Activated CD4-positive, alpha-beta T cell treated with anti-CD3 and anti-CD28 coated beads, Interleukin-2, amount 10 ng/mL, durations not matched to agents 24 days and 14 days (primary cell): ENCODE measurements at regions of chr1 and their contacts with region 1.

Region 1: GRCh38 chr1:214427871-214428277 is 123.5 kb downstream of the PTPN14 start:
- DNase-seq: peak; percentile 93
- H3K4me3 Mint-ChIP-seq: peak overlapping the region; percentile 72
- H3K27ac Mint-ChIP-seq: peak overlapping the region; percentile 97
- H3K4me1 Mint-ChIP-seq: peaks cover 34% of the 10 kb centered on the region
- H3K27me3 Mint-ChIP-seq: no peaks in the 10 kb centered on the region

Region 2: DNA sequence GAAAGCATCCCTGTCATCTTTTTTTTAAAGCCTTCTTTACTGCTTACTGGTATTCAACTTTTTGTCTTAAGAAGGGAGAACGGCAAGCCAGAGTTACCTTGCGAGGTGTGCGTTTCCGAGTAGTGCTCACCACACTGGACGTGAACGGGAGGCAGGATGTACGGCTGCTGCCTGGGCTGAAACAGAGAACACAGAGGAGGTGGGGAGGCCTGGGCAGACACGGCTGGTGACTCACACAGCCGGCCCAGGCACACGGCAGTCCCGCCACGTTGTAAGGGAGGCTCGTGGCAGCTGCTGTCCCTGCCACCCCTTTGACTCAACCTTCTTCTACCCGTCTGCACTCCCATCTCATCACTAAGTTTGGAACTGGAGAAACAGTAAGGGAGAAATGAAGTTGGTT is 41.1 kb before region 1 on chr1:
- intact Hi-C with region 1: loop called (anchors 2 kb)
- DNase-seq: peak; percentile 76
- H3K4me3 Mint-ChIP-seq: peak overlapping the region; percentile 53
- H3K27ac Mint-ChIP-seq: peak overlapping the region; percentile 84
- H3K4me1 Mint-ChIP-seq: peaks cover 28% of the 10 kb centered on the region
- H3K27me3 Mint-ChIP-seq: no peaks in the 10 kb centered on the region

Region 3: GRCh38 chr1:214404154-214404553 is 23.7 kb before region 1 on chr1:
- intact Hi-C with region 1: loop called (anchors 2 kb)
- DNase-seq: no peak
- H3K4me3 Mint-ChIP-seq: no peak overlapping the region
- H3K27ac Mint-ChIP-seq: peak overlapping the region; percentile 81
- H3K4me1 Mint-ChIP-seq: peaks cover 38% of the 10 kb centered on the region
- H3K27me3 Mint-ChIP-seq: no peaks in the 10 kb centered on the region

Region 4: GRCh38 chr1:214413315-214413714 is 14.6 kb before region 1 on chr1:
- intact Hi-C with region 1: loop called (anchors 2 kb)
- DNase-seq: no peak
- H3K4me3 Mint-ChIP-seq: no peak overlapping the region
- H3K27ac Mint-ChIP-seq: no peak overlapping the region
- H3K4me1 Mint-ChIP-seq: peaks cover 22% of the 10 kb centered on the region
- H3K27me3 Mint-ChIP-seq: no peaks in the 10 kb centered on the region

Region 5: GRCh38 chr1:214566158-214567104 is 138.6 kb after region 1 on chr1:
- intact Hi-C with region 1: no loop called
- DNase-seq: no peak
- H3K4me3 Mint-ChIP-seq: no peak overlapping the region
- H3K27ac Mint-ChIP-seq: peak overlapping the region; percentile 45
- H3K4me1 Mint-ChIP-seq: peaks cover 7% of the 10 kb centered on the region
- H3K27me3 Mint-ChIP-seq: peaks cover 9% of the 10 kb centered on the region

Region 6: GRCh38 chr1:215192306-215192705 is 764.4 kb after region 1 on chr1:
- intact Hi-C with region 1: no loop called
- DNase-seq: no peak
- H3K4me3 Mint-ChIP-seq: no peak overlapping the region
- H3K27ac Mint-ChIP-seq: no peak overlapping the region
- H3K4me1 Mint-ChIP-seq: no peaks in the 10 kb centered on the region
- H3K27me3 Mint-ChIP-seq: no peaks in the 10 kb centered on the region